K562 (cell line): ENCODE measurements at regions of chr5 and their contacts with region 1.

Region 1: DNA sequence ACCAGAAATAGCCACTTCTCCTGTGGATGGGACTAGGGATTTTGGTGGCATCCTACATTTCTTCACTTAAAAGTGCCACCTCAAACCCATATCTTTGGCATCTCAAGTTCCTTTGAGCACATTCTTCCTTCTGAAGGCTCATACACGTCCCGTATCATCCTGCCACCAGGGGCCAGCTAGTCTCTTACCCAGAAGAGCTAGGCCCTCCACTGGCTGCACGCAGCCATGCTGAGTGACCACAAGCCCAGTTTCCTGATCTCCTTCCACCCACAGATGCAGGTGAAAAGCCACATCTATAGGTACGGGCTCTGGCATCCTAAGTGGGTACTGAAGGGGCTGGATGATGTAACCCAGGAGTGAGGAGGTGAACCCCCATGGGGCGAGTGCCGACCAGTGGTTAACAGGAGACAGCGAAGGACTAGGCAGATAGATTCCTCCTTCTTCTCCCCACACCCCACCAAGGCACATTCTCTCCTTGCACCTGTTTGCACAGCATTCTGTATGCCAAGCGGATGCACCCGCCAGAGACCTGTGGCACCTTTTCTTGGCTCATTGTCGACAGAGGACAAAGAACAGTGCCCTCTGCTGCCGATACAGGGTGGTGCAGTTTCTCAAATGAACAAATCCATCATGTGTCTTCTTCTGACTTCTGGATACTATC is 14.4 kb upstream of the SCGB3A1 start:
- DNase-seq: peak; percentile 51 to 81 (median 59)
- ATAC-seq: peak; percentile 70
- H3K4me3 ChIP-seq: no peak overlapping the region
- H3K27ac ChIP-seq: no peak overlapping the region
- H3K4me1 ChIP-seq: peaks cover 10 to 45% of the 10 kb centered on the region in 2 experiments; a peak in 4 of 5 replicates
- H3K27me3 ChIP-seq: peaks cover 0 to 7% of the 10 kb centered on the region in 2 experiments; a peak in 2 of 5 replicates
- CTCF ChIP-seq: peak; percentile 77 to 89 (median 79)
- EP300 ChIP-seq: no peak
- POLR2A ChIP-seq: no peak
- RAD21 ChIP-seq: peak; percentile 30 to 73; a peak in 3 of 4 replicates

Region 2: DNA sequence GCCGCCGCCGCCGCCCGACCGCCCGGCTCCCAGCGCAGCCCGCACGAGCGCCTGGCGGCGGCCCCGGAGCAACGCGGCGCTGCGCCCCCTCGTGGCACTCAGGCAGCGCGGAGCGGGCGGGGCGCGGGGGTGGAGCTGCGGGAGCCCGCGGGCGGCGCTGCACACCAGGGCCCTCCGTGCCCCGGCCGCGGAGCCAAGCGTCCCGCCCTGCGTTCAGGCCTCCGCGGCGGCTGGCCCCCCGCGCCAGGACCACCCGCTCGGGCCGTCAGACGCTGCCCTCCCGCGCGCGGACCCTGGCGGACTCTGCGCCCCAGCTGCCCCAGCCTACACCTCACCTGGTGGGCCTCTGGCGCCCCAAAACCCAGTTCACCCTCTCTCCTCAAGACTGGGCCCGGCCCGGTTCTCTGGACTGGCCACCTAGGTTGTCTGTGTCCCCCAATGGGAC is 396.5 kb before region 1 on chr5 and contains the start of gene RASGEF1C:
- CTCF ChIA-PET with region 1: no interaction called
- POLR2A ChIA-PET with region 1: no interaction called
- in situ Hi-C with region 1: no loop called
- intact Hi-C with region 1: loop called (anchors 10 kb)
- DNase-seq: peak; percentile 86 to 89 (median 88)
- ATAC-seq: peak; percentile 95
- H3K4me3 ChIP-seq: peak within 1 kb of the TSS; percentile 35
- H3K27ac ChIP-seq: no peak within 1 kb of the TSS
- H3K4me1 ChIP-seq: peaks cover 8 to 41% of the 10 kb centered on the region in 2 experiments; a peak in 4 of 5 replicates
- H3K27me3 ChIP-seq: peaks cover 0 to 36% of the 10 kb centered on the region in 2 experiments; a peak in 3 of 5 replicates
- CTCF ChIP-seq: peak in 2 of 3 experiments; percentile 70 to 94; a peak in 5 of 6 replicates
- EP300 ChIP-seq: no peak
- POLR2A ChIP-seq: no peak
- RAD21 ChIP-seq: peak in 1 of 2 experiments; percentile 56; a peak in 3 of 4 replicates
- polyA plus RNA-seq, gene RASGEF1C: not detected

Region 3: GRCh38 chr5:180291943-180292831 is 313.5 kb before region 1 on chr5 and contains the start of gene MAPK9:
- CTCF ChIA-PET with region 1: interaction called, 15 read pairs
- POLR2A ChIA-PET with region 1: no interaction called
- in situ Hi-C with region 1: no loop called
- intact Hi-C with region 1: loop called (anchors 2 kb)
- DNase-seq: peak; percentile 90 to 97 (median 97)
- ATAC-seq: peak; percentile 89
- H3K4me3 ChIP-seq: peak within 1 kb of the TSS; percentile 93
- H3K27ac ChIP-seq: peak within 1 kb of the TSS; percentile 75
- H3K4me1 ChIP-seq: peaks cover 13 to 37% of the 10 kb centered on the region in 2 experiments; a peak in 4 of 5 replicates
- H3K27me3 ChIP-seq: no peaks in the 10 kb centered on the region
- CTCF ChIP-seq: no peak
- EP300 ChIP-seq: no peak
- POLR2A ChIP-seq: peak; percentile 55
- RAD21 ChIP-seq: no peak
- polyA plus RNA-seq, gene MAPK9: 4.8 to 6.5 TPM

Region 4: GRCh38 chr5:180470966-180471582 is 134.6 kb before region 1 on chr5:
- CTCF ChIA-PET with region 1: no interaction called
- POLR2A ChIA-PET with region 1: no interaction called
- in situ Hi-C with region 1: no loop called
- intact Hi-C with region 1: loop called (anchors 5 kb)
- DNase-seq: peak; percentile 72 to 79 (median 76)
- ATAC-seq: peak; percentile 89
- H3K4me3 ChIP-seq: no peak overlapping the region
- H3K27ac ChIP-seq: no peak overlapping the region
- H3K4me1 ChIP-seq: peaks cover 0 to 11% of the 10 kb centered on the region in 2 experiments; a peak in 2 of 5 replicates
- H3K27me3 ChIP-seq: peaks cover 6 to 66% of the 10 kb centered on the region in 2 experiments
- CTCF ChIP-seq: peak; percentile 81 to 89 (median 89)
- EP300 ChIP-seq: no peak
- POLR2A ChIP-seq: no peak
- RAD21 ChIP-seq: peak; percentile 53 to 80

Region 5: GRCh38 chr5:180494060-180494509 is 111.6 kb before region 1 on chr5 and contains the start of gene CNOT6:
- CTCF ChIA-PET with region 1: no interaction called
- POLR2A ChIA-PET with region 1: no interaction called
- in situ Hi-C with region 1: no loop called
- intact Hi-C with region 1: loop called (anchors 5 kb)
- DNase-seq: peak; percentile 96 to 98 (median 97)
- ATAC-seq: peak; percentile 91
- H3K4me3 ChIP-seq: peak within 1 kb of the TSS; percentile 99
- H3K27ac ChIP-seq: peak within 1 kb of the TSS; percentile 96
- H3K4me1 ChIP-seq: peaks cover 21 to 40% of the 10 kb centered on the region in 2 experiments
- H3K27me3 ChIP-seq: no peaks in the 10 kb centered on the region
- CTCF ChIP-seq: no peak
- EP300 ChIP-seq: no peak
- POLR2A ChIP-seq: peak; percentile 83
- RAD21 ChIP-seq: no peak; a peak in 1 of 4 replicates
- polyA plus RNA-seq, gene CNOT6: 4.9 to 7.9 TPM

Region 6: DNA sequence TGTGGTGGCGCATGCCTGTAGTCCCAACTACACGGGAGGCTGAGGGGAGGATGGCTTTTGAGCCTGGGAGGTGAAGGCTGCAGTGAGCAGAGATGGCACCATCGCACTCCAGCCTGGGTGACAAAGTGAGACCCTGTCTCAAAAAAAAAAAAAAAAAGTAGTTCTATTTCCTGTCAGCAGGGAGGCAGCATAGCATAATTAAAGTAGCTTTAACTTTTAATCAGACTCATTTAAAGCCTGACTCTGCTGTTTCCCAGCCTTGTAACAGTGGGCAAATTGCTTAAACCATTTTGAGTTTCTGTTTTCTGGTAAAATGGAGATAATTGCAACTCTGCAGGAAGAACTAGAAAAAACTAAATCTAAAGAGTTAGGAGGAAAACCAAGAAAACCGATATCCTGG is 80.3 kb before region 1 on chr5:
- CTCF ChIA-PET with region 1: no interaction called
- POLR2A ChIA-PET with region 1: no interaction called
- in situ Hi-C with region 1: no loop called
- intact Hi-C with region 1: loop called (anchors 1 kb)
- DNase-seq: no peak
- ATAC-seq: 0 out of 3 replicates have a peak, but pooled peaks have one; percentile 28
- H3K4me3 ChIP-seq: no peak overlapping the region
- H3K27ac ChIP-seq: no peak overlapping the region
- H3K4me1 ChIP-seq: peaks cover 0 to 11% of the 10 kb centered on the region in 2 experiments; a peak in 3 of 5 replicates
- H3K27me3 ChIP-seq: no peaks in the 10 kb centered on the region
- CTCF ChIP-seq: peak in 2 of 3 experiments; percentile 18 to 35; a peak in 2 of 6 replicates
- EP300 ChIP-seq: no peak
- POLR2A ChIP-seq: no peak
- RAD21 ChIP-seq: no peak

Region 7: DNA sequence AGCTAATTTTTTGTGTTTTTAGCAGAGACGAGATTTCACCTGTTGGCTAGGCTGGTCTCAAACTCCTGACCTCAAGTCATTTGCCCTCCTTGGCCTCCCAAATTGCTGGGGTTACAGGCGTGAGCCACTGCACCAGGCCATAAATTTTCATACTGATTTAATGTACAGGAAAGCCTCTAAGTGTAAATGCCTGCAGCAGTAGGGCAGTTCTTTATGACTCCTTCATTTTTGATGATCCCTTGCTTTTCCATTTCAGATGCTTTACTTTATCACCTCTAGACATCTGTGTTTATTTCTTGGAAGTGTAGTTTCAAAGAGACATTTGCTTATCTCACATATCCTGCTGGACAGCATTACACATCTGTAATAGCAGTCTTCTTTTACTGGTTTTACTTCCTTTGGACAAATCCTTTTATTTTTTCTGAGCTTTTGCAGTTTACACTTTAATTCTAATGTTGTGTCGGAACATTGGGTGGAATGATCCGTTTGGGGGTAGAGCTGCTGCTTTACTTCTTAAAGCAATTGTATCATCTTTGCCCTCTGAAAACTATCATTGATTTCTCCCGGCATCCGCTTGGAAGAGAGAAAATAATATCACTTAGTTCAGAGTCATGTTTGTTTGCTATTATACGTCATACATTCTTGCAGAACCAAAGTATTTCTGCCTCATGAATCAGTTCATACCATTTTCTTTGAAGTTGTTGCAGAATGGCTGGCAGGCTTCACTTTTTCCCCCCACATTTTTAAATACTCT is 50.3 kb before region 1 on chr5:
- CTCF ChIA-PET with region 1: no interaction called
- POLR2A ChIA-PET with region 1: no interaction called
- in situ Hi-C with region 1: no loop called
- intact Hi-C with region 1: loop called (anchors 10 kb)
- DNase-seq: peak; percentile 66 to 81 (median 72)
- ATAC-seq: peak; percentile 79
- H3K4me3 ChIP-seq: no peak overlapping the region
- H3K27ac ChIP-seq: peak overlapping the region; percentile 72
- H3K4me1 ChIP-seq: peaks cover 33 to 58% of the 10 kb centered on the region in 2 experiments; a peak in 4 of 5 replicates
- H3K27me3 ChIP-seq: no peaks in the 10 kb centered on the region
- CTCF ChIP-seq: no peak
- EP300 ChIP-seq: peak; percentile 99
- POLR2A ChIP-seq: no peak
- RAD21 ChIP-seq: no peak